ENCODE measurements at regions of chr9 and their contacts with region 1.

Region 1: DNA sequence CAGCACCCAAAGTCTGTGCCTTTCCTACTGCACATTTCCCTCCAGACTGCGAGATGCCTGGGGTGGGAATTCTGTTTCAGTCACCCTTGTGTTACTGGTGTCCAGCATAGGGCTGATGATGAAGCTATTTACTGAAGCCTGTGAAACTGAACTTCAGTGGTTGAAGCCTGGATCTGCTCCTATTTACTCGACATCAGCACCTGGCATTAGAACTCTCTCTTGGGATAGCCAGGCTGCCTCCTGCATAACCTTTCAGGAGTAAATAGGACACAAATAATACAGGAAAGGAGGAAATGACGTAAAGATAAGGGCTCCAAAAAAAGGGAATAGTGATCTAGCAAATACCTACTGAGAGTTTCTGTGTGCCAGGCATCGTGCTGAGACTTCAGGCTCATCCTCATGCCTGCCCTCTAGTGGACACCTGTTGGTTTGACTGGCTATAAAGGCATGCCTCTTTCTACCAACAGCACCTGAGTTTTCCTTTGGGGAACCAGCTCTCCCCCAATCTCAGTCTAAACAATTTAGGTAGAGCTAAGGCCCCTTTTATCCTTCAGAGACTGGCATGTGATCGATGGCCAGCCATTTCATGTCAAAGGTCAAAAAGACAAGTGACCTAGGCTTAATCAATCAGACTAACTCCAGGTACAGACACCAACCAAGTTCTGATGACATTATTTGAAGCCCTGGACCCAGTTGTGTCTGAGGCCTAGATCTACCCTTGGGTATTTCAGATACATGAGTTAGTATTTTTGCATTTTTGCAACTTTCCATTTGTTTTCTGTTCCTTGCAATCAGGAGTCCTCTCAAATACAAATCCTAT is 192.1 kb upstream of the TRIM32 start:
- DNase-seq: peak; percentile 38 to 42
- H3K4me3 ChIP-seq: no peak overlapping the region
- H3K27ac ChIP-seq: no peak overlapping the region
- H3K4me1 ChIP-seq: no peaks in the 10 kb centered on the region
- H3K27me3 ChIP-seq: no peaks in the 10 kb centered on the region
- CTCF ChIP-seq: peak; percentile 39 to 66 (median 52)
- POLR2A ChIP-seq: no peak

Region 2: GRCh38 chr9:116163293-116164055 is 331.6 kb before region 1 on chr9:
- intact Hi-C with region 1: loop called (anchors 10 kb)
- DNase-seq: peak in 1 of 2 donors; percentile 26
- H3K4me3 ChIP-seq: no peak overlapping the region
- H3K27ac ChIP-seq: no peak overlapping the region
- H3K4me1 ChIP-seq: peaks cover 0 to 5% of the 10 kb centered on the region in 2 donors
- H3K27me3 ChIP-seq: no peaks in the 10 kb centered on the region
- CTCF ChIP-seq: peak; percentile 14 to 56 (median 36)
- POLR2A ChIP-seq: no peak

Region 3: DNA sequence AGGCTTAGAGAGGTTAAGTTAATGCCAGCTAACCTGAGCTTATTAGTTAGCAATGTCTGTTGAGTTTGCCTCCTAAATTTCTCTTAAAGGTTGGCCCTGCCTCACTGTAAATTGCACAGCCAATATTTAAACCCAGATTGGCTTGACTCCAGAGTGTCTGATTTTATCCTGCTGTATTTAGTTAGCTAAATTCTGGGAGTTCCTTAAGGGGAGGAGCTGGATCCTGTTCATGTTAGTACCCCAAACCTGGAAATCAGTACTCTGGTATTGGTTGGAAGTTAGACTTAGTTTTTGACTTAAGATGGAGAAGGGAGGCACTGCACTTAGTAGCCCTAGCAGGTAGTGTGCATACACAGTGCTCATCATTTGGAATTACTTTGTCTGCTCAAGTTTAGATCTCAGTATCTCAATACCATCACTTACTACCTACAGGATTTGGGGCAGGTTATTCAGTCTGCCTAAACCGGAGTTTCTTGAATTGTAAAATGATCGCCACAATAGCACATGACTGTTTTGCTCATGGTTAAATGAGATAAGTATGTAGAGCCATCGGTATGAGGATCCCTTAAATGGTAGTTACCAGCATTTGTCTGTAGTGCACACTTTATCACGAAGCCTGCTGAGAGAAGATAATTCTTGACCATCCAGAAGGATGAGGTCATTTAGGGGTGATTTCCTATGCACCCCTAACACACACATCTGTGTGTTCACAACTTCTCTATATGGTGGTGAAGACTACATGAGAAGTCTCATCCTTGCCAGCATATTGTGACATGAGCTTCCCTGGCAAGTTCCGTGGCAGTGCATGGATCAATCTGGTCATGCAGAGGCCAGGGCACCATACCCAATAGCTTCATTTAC is 72.7 kb before region 1 on chr9:
- intact Hi-C with region 1: no loop called
- DNase-seq: no peak
- H3K4me3 ChIP-seq: no peak overlapping the region
- H3K27ac ChIP-seq: no peak overlapping the region
- H3K4me1 ChIP-seq: no peaks in the 10 kb centered on the region
- H3K27me3 ChIP-seq: no peaks in the 10 kb centered on the region
- CTCF ChIP-seq: no peak
- POLR2A ChIP-seq: no peak

Region 4: GRCh38 chr9:116549061-116549664 is 54.1 kb after region 1 on chr9:
- intact Hi-C with region 1: no loop called
- DNase-seq: peak in 1 of 2 donors; percentile 17
- H3K4me3 ChIP-seq: no peak overlapping the region
- H3K27ac ChIP-seq: no peak overlapping the region
- H3K4me1 ChIP-seq: peaks cover 0 to 4% of the 10 kb centered on the region in 2 donors
- H3K27me3 ChIP-seq: no peaks in the 10 kb centered on the region
- CTCF ChIP-seq: no peak
- POLR2A ChIP-seq: no peak

Region 5: GRCh38 chr9:117464941-117465616 is 970.1 kb after region 1 on chr9:
- intact Hi-C with region 1: no loop called
- DNase-seq: no peak
- H3K4me3 ChIP-seq: no peak overlapping the region
- H3K27ac ChIP-seq: no peak overlapping the region
- H3K4me1 ChIP-seq: no peaks in the 10 kb centered on the region
- H3K27me3 ChIP-seq: no peaks in the 10 kb centered on the region
- CTCF ChIP-seq: no peak
- POLR2A ChIP-seq: no peak

Measured in thyroid gland (tissue), 4 donors.